Kidney (tissue), 22 donors: ENCODE measurements at regions of chr6 and their contacts with region 1.

Region 1: GRCh38 chr6:117449549-117450439 is 24.1 kb upstream of the ROS1 start:
- DNase-seq: peak in 4 of 5 donors; percentile 54 to 90 (median 81)
- H3K4me3 ChIP-seq: no peak overlapping the region
- H3K27ac ChIP-seq: no peak overlapping the region
- H3K4me1 ChIP-seq: no peaks in the 10 kb centered on the region
- H3K27me3 ChIP-seq: no peaks in the 10 kb centered on the region
- CTCF ChIP-seq: peak; percentile 76

Region 2: GRCh38 chr6:117555882-117556498 is 106.2 kb after region 1 on chr6:
- intact Hi-C with region 1: loop called (anchors 5 kb)
- DNase-seq: peak in 3 of 5 donors; percentile 28 to 62 (median 58)
- H3K4me3 ChIP-seq: no peak overlapping the region
- H3K27ac ChIP-seq: no peak overlapping the region
- H3K4me1 ChIP-seq: no peaks in the 10 kb centered on the region
- H3K27me3 ChIP-seq: no peaks in the 10 kb centered on the region
- CTCF ChIP-seq: peak; percentile 88

Region 3: GRCh38 chr6:117568831-117569410 is 119.1 kb after region 1 on chr6:
- intact Hi-C with region 1: no loop called
- DNase-seq: no peak
- H3K4me3 ChIP-seq: no peak overlapping the region
- H3K27ac ChIP-seq: no peak overlapping the region
- H3K4me1 ChIP-seq: no peaks in the 10 kb centered on the region
- H3K27me3 ChIP-seq: no peaks in the 10 kb centered on the region
- CTCF ChIP-seq: no peak